Activated naive CD4-positive, alpha-beta T cell treated with anti-CD3 and anti-CD28 coated beads, Interleukin-2, amount 10 ng/mL, durations not matched to agents 7 days and 5 days (primary cell): ENCODE measurements at regions of chr1 and their contacts with region 1.

Region 1: GRCh38 chr1:6554031-6554906 is at the start of gene NOL9:
- DNase-seq: peak; percentile 97
- H3K4me3 Mint-ChIP-seq: peak within 1 kb of the TSS; percentile 78
- H3K27ac Mint-ChIP-seq: peak within 1 kb of the TSS; percentile 83
- H3K4me1 Mint-ChIP-seq: peaks cover 23% of the 10 kb centered on the region
- H3K27me3 Mint-ChIP-seq: peaks cover 5% of the 10 kb centered on the region

Region 2: DNA sequence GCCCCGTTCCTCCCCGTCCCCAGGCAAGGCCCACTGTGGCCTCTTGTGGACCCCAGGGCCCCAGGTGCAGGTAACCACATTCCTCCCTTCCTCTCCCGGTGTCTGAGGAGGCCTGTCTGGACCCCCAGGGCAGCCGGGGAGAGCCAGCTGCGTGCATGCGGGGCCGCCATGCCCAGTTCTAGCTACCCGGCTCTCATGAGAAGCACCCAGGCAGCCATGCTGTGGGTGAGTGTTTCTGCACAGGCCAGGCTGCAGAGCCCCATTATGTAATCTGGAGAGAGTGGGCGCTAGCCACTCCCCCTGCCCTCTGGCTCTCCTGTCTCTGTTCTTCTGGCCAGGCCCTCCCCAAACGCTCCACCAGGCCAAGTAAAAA is 44.4 kb before region 1 on chr1:
- CTCF ChIA-PET with region 1: no interaction called
- DNase-seq: no peak
- H3K4me3 Mint-ChIP-seq: no peak overlapping the region
- H3K27ac Mint-ChIP-seq: no peak overlapping the region
- H3K4me1 Mint-ChIP-seq: no peaks in the 10 kb centered on the region
- H3K27me3 Mint-ChIP-seq: peaks cover 16% of the 10 kb centered on the region

Region 3: GRCh38 chr1:6535214-6535613 is 19.1 kb before region 1 on chr1:
- CTCF ChIA-PET with region 1: interaction called, 17 read pairs
- DNase-seq: no peak
- H3K4me3 Mint-ChIP-seq: no peak overlapping the region
- H3K27ac Mint-ChIP-seq: no peak overlapping the region
- H3K4me1 Mint-ChIP-seq: peaks cover 2% of the 10 kb centered on the region
- H3K27me3 Mint-ChIP-seq: no peaks in the 10 kb centered on the region